ENCODE measurements at regions of chr13 and their contacts with region 1.

Region 1: GRCh38 chr13:74243637-74244526 is 109.7 kb upstream of the KLF12 start:
- DNase-seq: no peak
- H3K4me3 Mint-ChIP-seq: peak overlapping the region; percentile 48
- H3K27ac Mint-ChIP-seq: peak overlapping the region; percentile 81
- H3K4me1 Mint-ChIP-seq: peaks cover 67% of the 10 kb centered on the region
- H3K27me3 Mint-ChIP-seq: no peaks in the 10 kb centered on the region

Region 2: DNA sequence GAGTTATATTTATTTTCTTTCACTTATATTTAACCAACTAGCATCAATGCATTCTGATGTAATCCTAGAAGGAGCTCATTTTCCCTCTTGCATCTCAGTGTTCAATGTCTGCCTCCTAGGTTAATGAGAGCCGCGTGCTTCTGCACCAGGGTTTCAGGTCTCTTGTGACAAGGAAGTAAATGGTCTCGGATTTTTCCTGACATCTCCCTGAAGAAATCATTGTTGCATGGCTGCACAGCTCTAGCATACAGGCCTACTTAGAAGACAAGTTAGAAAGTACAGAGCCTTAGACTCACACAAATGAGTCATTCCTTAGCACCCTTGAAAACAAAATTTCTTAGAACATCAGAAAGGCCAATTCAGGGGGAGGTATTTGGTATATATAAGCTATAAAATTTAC is 52.5 kb before region 1 on chr13:
- CTCF ChIA-PET with region 1: no interaction called
- intact Hi-C with region 1: loop called (anchors 2 kb)
- DNase-seq: no peak
- H3K4me3 Mint-ChIP-seq: no peak overlapping the region
- H3K27ac Mint-ChIP-seq: peak overlapping the region; percentile 50
- H3K4me1 Mint-ChIP-seq: peaks cover 38% of the 10 kb centered on the region
- H3K27me3 Mint-ChIP-seq: no peaks in the 10 kb centered on the region